HEK293T (cell line): ENCODE measurements at regions of chr9 and their contacts with region 1.

Region 1: DNA sequence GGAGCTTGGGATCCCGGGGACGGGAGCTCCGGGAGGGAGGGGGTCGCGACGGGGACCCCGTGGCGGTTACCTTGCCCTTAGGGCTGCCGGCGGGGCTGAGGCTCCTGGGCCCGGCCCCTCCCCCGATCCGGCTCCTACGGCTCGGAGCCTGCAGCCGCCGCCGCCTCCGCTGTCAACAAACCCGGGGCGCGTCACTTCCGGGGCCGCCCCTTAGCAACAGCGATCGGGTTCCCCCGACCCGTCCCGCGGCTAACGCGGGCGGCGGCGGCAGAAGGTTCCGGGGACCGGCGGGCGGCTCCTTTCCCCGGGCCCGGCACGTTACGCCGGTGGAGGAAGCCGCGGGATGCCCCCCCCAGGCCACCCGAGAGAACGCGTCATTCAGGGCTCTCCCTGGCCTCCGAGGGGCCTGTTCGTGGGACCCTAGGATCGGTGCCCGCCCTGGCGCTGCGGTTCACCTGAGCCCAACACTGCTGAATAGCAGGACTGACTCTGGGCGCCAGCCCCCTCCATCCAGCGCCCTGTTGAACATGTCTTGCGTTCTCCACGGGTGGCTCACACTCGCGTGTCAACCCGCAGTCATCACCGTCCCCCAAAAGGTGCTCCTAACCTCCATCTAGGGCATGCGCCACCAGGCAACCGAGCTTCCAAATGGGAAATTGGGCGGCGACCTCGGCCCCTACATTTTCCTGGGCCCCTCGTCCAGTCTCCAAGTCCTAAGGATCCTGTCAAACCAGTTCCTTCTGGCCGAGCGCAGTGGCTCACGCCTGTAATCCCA is at the start of gene ZER1:
- DNase-seq: peak; percentile 95

Region 2: GRCh38 chr9:128786681-128787601 is 15.0 kb after region 1 on chr9 and contains the start of gene TBC1D13:
- CTCF ChIA-PET with region 1: no interaction called
- POLR2A ChIA-PET with region 1: interaction called, 14 read pairs
- DNase-seq: peak; percentile 92

Region 3: DNA sequence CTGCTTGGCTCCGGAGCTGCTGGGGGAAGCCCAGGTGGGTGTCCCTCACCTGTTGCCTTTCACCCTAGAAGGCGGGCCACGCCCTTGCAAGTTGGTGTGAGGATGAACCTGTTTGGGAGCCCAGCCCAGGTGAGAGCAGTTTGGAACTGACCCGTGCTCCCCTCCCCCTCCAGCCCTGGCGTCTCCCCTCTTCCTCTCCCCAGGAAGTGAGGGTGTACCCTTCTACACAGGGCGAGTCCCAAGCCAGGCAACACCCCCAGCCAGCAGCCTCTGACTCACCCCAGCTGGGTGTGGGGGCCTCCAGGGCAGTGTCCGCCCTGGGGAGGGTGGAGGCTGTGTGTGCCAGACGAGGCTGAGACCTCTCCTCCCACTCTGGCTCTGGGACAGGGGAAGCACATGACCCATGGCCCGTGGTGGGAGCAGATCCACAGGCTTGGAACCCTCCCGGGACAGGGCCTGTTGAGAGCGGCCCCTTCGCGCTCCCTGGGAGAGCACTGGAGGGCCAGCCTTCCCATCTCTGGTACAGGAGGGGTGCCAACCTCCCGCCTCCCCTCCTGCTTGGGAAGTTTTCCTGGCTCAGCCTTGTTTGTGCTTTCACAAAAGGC is 120.5 kb after region 1 on chr9:
- CTCF ChIA-PET with region 1: no interaction called
- POLR2A ChIA-PET with region 1: no interaction called
- DNase-seq: no peak